Dendritic cell treated with granulocyte-macrophage colony-stimulating factor and Interleukin-4, amounts not matched to agents 40 ng/mL and 50 ng/mL, for 4 days (primary cell): ENCODE measurements at regions of chr1 and their contacts with region 1.

Region 1: DNA sequence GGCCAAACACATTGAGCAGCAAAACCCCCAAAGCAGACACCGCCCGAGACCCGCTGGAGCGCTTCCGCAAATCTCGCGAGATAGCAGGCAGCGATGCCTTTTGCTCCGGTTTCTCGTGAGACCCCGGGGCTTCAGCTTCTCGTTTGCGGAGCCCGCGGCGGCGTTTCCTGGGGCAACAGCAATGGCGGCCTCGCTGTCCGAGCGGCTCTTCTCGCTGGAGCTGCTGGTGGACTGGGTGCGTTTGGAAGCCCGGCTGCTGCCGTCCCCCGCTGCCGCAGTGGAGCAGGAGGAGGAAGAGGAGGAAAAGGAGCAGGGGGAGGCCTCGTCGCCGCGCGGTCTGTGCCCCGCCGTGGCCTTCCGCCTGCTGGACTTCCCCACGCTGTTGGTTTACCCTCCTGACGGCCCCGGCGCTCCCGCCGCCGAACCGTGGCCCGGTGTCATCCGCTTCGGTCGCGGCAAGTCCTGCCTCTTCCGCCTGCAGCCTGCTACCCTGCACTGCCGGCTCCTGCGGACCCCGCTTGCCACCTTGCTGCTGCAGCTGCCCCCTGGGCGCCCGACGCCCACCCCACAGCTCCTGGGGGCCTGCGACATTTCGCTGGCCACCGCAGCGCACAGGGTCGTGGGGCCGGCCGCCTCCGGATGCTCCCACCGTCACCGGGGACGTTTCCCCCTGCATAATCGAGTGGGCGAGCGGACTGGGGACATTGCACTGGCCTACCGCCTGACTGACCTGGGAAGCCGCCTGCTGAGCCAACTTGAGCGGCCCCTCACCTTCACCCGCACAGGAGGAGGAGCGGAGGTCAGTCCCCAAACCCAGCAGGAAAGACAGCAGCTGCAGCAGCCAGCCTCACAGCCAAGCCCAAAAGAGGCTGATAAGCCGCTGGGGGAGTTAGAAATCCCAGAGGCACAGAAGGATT is at the start of gene MAP10:
- H3K4me3 Mint-ChIP-seq: peak within 1 kb of the TSS; percentile 93
- H3K27ac Mint-ChIP-seq: peak within 1 kb of the TSS; percentile 93
- H3K4me1 Mint-ChIP-seq: peaks cover 26% of the 10 kb centered on the region
- H3K27me3 Mint-ChIP-seq: no peaks in the 10 kb centered on the region

Region 2: DNA sequence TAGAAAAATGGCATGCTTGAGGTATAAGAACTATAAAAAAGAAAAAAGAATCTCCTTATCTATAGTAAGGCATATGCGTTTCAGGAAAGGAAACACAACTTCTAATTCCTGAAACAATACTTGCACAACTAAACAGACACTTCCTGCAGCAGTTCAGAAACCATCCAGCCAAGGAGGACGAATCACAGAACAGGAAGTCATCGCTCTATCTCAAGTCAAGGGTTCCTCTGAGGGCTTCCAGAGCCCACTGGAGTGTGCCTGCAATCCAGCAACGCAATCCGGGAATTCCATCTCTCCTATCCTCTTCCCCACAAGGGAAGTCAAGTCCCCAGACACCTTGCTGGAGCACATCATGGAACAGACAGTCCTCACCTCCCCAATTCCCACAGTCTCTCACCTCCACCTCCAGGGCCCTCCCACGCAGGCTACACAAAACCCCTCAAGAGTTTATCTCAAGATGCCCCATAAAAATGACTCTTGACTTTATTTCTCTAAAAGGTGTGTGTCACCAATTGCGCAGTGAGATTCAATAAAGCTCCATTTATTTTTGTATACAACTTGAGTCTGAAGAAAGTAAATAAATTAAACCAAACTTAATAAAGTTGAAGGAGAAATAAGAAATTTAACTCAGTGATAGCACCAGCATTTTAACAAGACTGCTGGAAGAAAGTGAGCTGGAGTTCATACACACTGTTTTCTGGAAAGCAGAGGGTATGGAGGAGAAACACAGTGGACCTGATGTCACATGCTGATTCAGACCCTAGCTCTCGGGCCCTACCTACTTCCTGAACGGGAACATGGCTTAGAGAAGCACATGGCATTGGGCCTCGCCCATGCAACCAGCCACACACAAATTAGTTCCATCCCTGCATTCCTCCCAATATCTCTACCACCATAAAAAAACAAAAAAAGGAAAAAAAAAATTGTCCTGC is 215.4 kb before region 1 on chr1:
- intact Hi-C with region 1: no loop called
- H3K4me3 Mint-ChIP-seq: peak overlapping the region; percentile 46
- H3K27ac Mint-ChIP-seq: peak overlapping the region; percentile 95
- H3K4me1 Mint-ChIP-seq: peaks cover 63% of the 10 kb centered on the region
- H3K27me3 Mint-ChIP-seq: no peaks in the 10 kb centered on the region

Region 3: DNA sequence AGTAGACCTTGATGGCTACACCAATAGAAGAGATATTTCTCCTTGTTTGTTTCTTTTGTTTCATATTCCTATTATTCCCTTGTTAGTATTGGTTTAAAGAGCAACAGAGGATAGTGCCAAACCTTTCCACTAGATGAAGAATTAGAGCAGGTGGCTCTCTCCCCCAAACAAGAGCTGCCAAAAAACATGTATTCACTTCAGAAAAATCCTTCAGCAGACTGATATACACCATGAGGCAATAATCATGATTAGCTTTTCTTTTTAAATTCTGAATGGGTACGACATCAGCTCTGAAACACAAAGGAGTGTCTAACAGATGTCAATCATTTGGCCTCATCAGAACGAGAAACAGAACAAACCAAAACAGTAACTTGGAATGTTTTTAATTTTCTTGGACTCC is 67.6 kb before region 1 on chr1:
- intact Hi-C with region 1: no loop called
- H3K4me3 Mint-ChIP-seq: no peak overlapping the region
- H3K27ac Mint-ChIP-seq: no peak overlapping the region
- H3K4me1 Mint-ChIP-seq: no peaks in the 10 kb centered on the region
- H3K27me3 Mint-ChIP-seq: no peaks in the 10 kb centered on the region

Region 4: GRCh38 chr1:232767305-232768074 is 38.0 kb before region 1 on chr1:
- intact Hi-C with region 1: loop called (anchors 2 kb)
- H3K4me3 Mint-ChIP-seq: no peak overlapping the region
- H3K27ac Mint-ChIP-seq: no peak overlapping the region
- H3K4me1 Mint-ChIP-seq: peaks cover 36% of the 10 kb centered on the region
- H3K27me3 Mint-ChIP-seq: no peaks in the 10 kb centered on the region

Region 5: GRCh38 chr1:232950197-232951176 is 145.0 kb after region 1 on chr1 and contains the start of gene NTPCR:
- intact Hi-C with region 1: loop called (anchors 5 kb)
- H3K4me3 Mint-ChIP-seq: peak within 1 kb of the TSS; percentile 87
- H3K27ac Mint-ChIP-seq: peak within 1 kb of the TSS; percentile 95
- H3K4me1 Mint-ChIP-seq: peaks cover 39% of the 10 kb centered on the region
- H3K27me3 Mint-ChIP-seq: no peaks in the 10 kb centered on the region